ENCODE measurements at regions of chr10 and their contacts with region 1.

Region 1: DNA sequence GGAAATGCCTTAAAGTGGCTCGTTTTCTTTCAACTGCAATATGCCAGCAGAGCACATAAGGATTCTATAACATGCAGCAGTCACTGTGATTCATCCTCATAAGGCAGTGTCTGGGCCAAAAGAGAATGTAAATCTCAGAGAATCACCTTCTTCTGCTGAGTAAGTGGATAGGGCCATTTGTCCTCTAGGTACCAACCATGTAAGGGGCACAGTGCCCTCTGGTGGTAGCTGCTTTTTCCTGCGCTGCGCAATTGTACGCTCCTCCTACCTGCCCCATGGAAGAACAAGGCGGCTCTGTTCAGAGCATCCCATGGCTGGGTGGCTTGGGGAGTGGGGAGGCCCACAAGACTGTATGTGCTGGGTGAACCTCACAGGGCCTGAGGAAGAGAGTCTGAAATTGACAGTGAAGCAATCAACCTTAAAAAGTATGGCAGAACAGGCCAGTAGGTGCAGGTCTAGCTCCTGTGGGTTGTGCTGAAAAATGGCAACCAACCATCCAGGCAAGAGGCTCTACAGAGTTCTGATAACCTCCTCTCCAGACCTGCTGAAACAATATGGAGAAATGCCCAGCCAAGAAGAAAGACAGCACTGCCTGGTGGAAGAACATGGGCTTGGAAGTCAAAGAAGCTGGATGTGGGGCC is 78.6 kb upstream of the C10orf90 start:
- DNase-seq: peak; percentile 73 to 81
- H3K4me3 ChIP-seq: no peak overlapping the region
- H3K4me3 Mint-ChIP-seq: no peak overlapping the region
- H3K27ac Mint-ChIP-seq: no peak overlapping the region
- H3K4me1 ChIP-seq: no peaks in the 10 kb centered on the region
- H3K4me1 Mint-ChIP-seq: peaks cover 11% of the 10 kb centered on the region
- H3K27me3 ChIP-seq: no peaks in the 10 kb centered on the region
- H3K27me3 Mint-ChIP-seq: no peaks in the 10 kb centered on the region
- CTCF ChIP-seq: peak; percentile 69 to 78

Region 2: GRCh38 chr10:126569513-126570244 is 179.5 kb before region 1 on chr10:
- CTCF ChIA-PET with region 1: no interaction called
- POLR2A ChIA-PET with region 1: no interaction called
- intact Hi-C with region 1: loop called (anchors 1 kb)
- DNase-seq: no peak
- H3K4me3 ChIP-seq: no peak overlapping the region
- H3K4me3 Mint-ChIP-seq: no peak overlapping the region
- H3K27ac Mint-ChIP-seq: no peak overlapping the region
- H3K4me1 ChIP-seq: no peaks in the 10 kb centered on the region
- H3K4me1 Mint-ChIP-seq: no peaks in the 10 kb centered on the region
- H3K27me3 ChIP-seq: no peaks in the 10 kb centered on the region
- H3K27me3 Mint-ChIP-seq: peaks cover 9% of the 10 kb centered on the region
- CTCF ChIP-seq: no peak

Region 3: GRCh38 chr10:126687121-126687606 is 62.0 kb before region 1 on chr10:
- CTCF ChIA-PET with region 1: no interaction called
- POLR2A ChIA-PET with region 1: no interaction called
- intact Hi-C with region 1: no loop called
- DNase-seq: no peak
- H3K4me3 ChIP-seq: no peak overlapping the region
- H3K4me3 Mint-ChIP-seq: no peak overlapping the region
- H3K27ac Mint-ChIP-seq: no peak overlapping the region
- H3K4me1 ChIP-seq: peaks cover 3% of the 10 kb centered on the region
- H3K4me1 Mint-ChIP-seq: peaks cover 4% of the 10 kb centered on the region
- H3K27me3 ChIP-seq: no peaks in the 10 kb centered on the region
- H3K27me3 Mint-ChIP-seq: no peaks in the 10 kb centered on the region
- CTCF ChIP-seq: no peak